ENCODE measurements at regions of chr1 and their contacts with region 1.

Region 1: DNA sequence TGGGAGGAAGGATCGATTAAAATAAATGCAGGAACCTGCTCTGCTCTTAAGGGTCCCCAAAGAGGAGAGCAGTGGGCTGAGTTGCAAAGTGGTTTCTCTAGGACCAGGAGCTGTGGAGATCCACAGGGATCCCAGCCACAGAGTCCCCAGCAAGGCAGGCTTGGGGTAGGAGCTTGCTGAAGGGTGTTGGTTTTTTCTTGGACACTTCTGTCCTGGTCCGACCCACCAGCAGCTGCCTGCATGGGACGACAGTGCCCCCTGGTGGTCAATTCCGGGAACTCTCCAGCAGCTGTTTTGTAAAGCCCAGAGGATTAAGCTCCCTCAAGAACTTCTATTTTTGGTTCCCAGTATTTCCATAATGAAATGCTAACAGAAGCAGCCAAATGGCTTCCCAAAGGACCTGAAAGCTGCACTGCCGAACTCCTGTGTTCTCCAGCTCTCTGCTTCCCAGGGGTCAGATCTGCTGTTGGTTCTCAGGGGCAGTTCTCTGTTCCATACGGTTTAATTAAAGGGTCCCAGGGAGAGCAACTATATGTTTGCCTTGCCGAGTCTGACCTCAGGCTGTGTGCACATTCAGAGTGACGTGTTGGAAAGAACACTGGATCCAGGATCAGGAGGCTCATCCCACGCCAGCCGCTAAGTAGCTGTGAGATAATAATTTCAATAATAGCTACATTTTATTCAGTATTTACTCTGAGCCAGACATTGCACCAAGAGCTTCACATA is 23.2 kb downstream of the NENF start:
- DNase-seq: no peak
- ATAC-seq: peak; percentile 91
- H3K4me3 ChIP-seq: no peak overlapping the region
- H3K27ac ChIP-seq: no peak overlapping the region
- H3K4me1 ChIP-seq: no peaks in the 10 kb centered on the region
- H3K27me3 ChIP-seq: no peaks in the 10 kb centered on the region; a peak in 1 of 4 replicates
- CTCF ChIP-seq: peak; percentile 95 to 99 (median 96)
- EP300 ChIP-seq: no peak
- POLR2A ChIP-seq: no peak
- RAD21 ChIP-seq: peak; percentile 100

Region 2: GRCh38 chr1:211825980-211826379 is 630.0 kb before region 1 on chr1:
- CTCF ChIA-PET with region 1: no interaction called
- POLR2A ChIA-PET with region 1: no interaction called
- RAD21 ChIA-PET with region 1: no interaction called
- SMC1A ChIA-PET with region 1: no interaction called
- in situ Hi-C with region 1: no loop called
- intact Hi-C with region 1: no loop called
- DNase-seq: no peak
- ATAC-seq: no peak
- H3K4me3 ChIP-seq: no peak overlapping the region
- H3K27ac ChIP-seq: no peak overlapping the region
- H3K4me1 ChIP-seq: no peaks in the 10 kb centered on the region; the same call in 1 of the 2 replicates
- H3K27me3 ChIP-seq: no peaks in the 10 kb centered on the region
- CTCF ChIP-seq: no peak
- EP300 ChIP-seq: no peak
- POLR2A ChIP-seq: no peak
- RAD21 ChIP-seq: no peak

Region 3: DNA sequence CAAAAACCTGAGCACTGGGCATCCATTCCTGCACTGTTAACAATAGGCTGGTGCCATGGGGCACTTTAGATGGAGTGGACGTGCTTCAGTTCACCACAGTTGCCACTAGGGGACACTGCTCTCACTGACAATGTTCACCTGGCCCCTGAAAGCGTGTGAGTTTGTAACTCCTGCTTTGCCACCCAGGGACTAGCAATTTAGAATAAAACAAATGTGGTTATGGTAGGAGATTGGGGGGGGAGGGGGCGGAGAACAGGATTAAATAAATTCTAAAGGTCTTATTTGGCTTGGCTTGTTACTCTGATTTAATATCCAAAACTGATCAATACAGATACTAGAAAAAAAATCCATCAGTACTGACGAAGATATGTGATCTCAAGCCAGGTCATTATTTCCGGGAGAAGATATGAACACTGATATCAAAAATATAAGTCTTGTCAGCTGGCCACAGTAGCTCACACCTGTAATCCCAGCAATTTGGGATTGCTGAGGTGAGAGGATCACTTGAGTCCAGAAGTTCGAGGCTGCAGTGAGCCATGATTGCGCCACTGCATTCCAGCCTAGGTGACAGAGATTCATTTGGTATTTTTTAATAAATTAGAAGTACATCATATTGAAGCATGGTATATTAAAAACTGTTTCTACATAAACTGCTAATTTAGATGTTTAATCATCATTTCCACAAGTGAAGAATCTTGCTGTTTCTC is 443.8 kb before region 1 on chr1:
- CTCF ChIA-PET with region 1: interaction called, 12 read pairs
- POLR2A ChIA-PET with region 1: no interaction called
- RAD21 ChIA-PET with region 1: interaction called, 5 read pairs
- SMC1A ChIA-PET with region 1: interaction called, 14 read pairs
- in situ Hi-C with region 1: no loop called
- intact Hi-C with region 1: loop called (anchors 1 kb)
- DNase-seq: peak; percentile 38
- ATAC-seq: peak; percentile 100
- H3K4me3 ChIP-seq: no peak overlapping the region
- H3K27ac ChIP-seq: no peak overlapping the region
- H3K4me1 ChIP-seq: no peaks in the 10 kb centered on the region
- H3K27me3 ChIP-seq: no peaks in the 10 kb centered on the region
- CTCF ChIP-seq: peak; percentile 95 to 100 (median 98)
- EP300 ChIP-seq: no peak
- POLR2A ChIP-seq: no peak
- RAD21 ChIP-seq: peak; percentile 97

Region 4: DNA sequence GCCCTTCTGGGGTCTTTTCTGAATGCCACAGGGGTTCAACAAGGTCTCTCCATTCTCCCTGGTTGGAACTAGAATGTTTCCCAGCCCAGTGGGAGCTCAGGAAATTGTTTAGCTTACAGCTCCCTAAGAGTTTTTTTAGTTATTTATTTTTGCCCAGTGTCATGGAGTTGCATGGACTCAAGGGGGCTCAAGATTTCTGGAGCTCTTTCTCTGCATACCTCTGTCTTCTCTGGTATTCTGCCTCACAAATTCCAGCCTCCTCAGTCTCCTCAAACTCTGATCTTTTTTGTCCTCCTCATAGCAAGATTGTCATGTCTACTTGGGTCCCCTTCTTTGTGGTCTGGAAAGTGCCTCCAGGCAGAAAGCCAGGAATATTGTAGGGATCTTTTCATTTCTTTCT is 186.7 kb before region 1 on chr1:
- CTCF ChIA-PET with region 1: interaction called, 16 read pairs
- POLR2A ChIA-PET with region 1: no interaction called
- RAD21 ChIA-PET with region 1: interaction called, 3 read pairs
- SMC1A ChIA-PET with region 1: interaction called, 5 read pairs
- in situ Hi-C with region 1: no loop called
- intact Hi-C with region 1: no loop called
- DNase-seq: no peak
- ATAC-seq: no peak
- H3K4me3 ChIP-seq: no peak overlapping the region
- H3K27ac ChIP-seq: no peak overlapping the region
- H3K4me1 ChIP-seq: no peaks in the 10 kb centered on the region
- H3K27me3 ChIP-seq: no peaks in the 10 kb centered on the region; a peak in 1 of 4 replicates
- CTCF ChIP-seq: no peak
- EP300 ChIP-seq: no peak
- POLR2A ChIP-seq: no peak
- RAD21 ChIP-seq: no peak

Region 5: DNA sequence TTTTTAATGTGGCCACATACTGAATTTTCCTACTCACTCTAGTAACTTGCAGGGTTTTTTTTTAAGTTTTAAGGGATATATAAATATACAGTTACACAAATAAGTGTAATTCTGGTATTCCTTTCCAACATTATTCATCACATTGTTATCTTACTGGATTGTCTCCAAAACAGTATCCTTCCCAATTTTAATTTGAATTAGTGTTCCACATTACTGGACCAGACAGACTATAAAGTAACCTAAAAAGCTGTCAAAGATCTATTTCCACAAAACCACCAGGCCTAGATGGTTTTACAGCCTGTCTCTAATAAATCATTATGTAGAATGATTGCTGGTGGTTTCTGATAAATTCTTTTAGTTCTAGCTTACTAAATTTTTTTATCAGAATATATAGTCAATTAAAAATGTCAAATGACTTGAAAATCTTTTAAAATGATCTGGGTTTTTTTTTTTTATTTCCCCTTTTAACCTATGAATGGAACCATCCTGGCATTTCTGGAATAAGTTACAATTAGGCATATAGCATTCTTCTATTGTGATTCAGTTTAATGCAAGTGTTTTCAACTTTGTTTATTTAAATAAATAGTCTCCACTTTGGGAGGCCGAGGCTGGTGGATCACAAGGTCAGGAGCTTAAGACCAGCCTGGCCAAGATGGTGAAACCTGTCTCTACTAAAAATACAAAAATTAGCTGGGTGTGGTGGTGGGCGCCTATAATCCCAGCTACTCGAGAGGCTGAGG is 100.6 kb before region 1 on chr1:
- CTCF ChIA-PET with region 1: interaction called, 26 read pairs
- POLR2A ChIA-PET with region 1: no interaction called
- RAD21 ChIA-PET with region 1: interaction called, 6 read pairs
- SMC1A ChIA-PET with region 1: interaction called, 102 read pairs
- in situ Hi-C with region 1: no loop called
- intact Hi-C with region 1: no loop called
- DNase-seq: no peak
- ATAC-seq: no peak
- H3K4me3 ChIP-seq: no peak overlapping the region
- H3K27ac ChIP-seq: no peak overlapping the region
- H3K4me1 ChIP-seq: no peaks in the 10 kb centered on the region
- H3K27me3 ChIP-seq: no peaks in the 10 kb centered on the region
- CTCF ChIP-seq: no peak
- EP300 ChIP-seq: no peak
- POLR2A ChIP-seq: no peak
- RAD21 ChIP-seq: no peak

Region 6: DNA sequence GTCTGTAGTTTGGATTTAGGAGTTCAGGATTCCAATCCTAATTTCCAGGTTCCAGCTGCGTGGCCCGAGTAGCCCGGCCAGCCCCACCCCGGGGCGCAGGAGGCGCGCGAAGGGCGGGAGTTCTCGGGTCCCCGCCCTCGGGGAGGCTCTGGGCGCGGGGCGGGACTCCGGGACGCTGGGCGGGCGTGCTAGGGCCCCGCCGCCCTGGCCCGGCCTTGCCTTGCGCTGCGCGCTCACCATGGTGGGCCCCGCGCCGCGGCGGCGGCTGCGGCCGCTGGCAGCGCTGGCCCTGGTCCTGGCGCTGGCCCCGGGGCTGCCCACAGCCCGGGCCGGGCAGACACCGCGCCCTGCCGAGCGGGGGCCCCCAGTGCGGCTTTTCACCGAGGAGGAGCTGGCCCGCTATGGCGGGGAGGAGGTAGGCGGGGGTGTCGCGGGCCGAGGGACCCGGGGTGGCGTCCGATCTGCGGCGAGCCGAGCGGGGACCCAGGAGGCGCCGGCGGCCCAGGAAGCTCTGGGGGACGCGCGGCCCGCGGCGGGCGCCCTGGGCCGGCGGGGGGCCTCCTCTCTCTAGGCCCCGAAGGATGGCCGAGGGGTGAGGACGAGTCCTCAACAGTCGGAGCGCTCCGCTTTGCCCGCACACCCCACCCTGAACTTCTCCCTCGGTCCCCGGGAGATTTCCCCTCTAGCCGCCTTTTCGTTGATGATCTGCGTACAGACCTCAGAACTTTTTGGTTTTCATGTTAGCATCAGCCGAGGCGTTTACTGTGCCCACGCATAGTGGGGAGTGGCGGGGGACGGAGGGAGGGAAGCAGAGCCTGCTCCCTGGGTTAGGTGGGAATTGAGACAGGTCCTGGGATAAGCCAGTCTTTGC is 23.0 kb before region 1 on chr1 and contains the start of gene NENF:
- CTCF ChIA-PET with region 1: interaction called, 13 read pairs
- POLR2A ChIA-PET with region 1: no interaction called
- RAD21 ChIA-PET with region 1: interaction called, 10 read pairs
- SMC1A ChIA-PET with region 1: interaction called, 19 read pairs
- in situ Hi-C with region 1: no loop called
- intact Hi-C with region 1: no loop called
- DNase-seq: no peak
- ATAC-seq: peak; percentile 100
- H3K4me3 ChIP-seq: peak within 1 kb of the TSS; percentile 86
- H3K27ac ChIP-seq: peak within 1 kb of the TSS; percentile 64
- H3K4me1 ChIP-seq: peaks cover 11% of the 10 kb centered on the region
- H3K27me3 ChIP-seq: no peaks in the 10 kb centered on the region
- CTCF ChIP-seq: no peak
- EP300 ChIP-seq: no peak
- POLR2A ChIP-seq: peak; percentile 70; the same call in 1 of the 2 replicates
- RAD21 ChIP-seq: no peak
- polyA plus RNA-seq, gene NENF: 5.1 to 19.3 TPM

Region 7: GRCh38 chr1:212630158-212630900 is 174.4 kb after region 1 on chr1:
- CTCF ChIA-PET with region 1: interaction called, 13 read pairs
- POLR2A ChIA-PET with region 1: no interaction called
- RAD21 ChIA-PET with region 1: interaction called, 4 read pairs
- SMC1A ChIA-PET with region 1: interaction called, 3 read pairs
- in situ Hi-C with region 1: no loop called
- intact Hi-C with region 1: no loop called
- DNase-seq: no peak
- ATAC-seq: peak; percentile 99
- H3K4me3 ChIP-seq: no peak overlapping the region
- H3K27ac ChIP-seq: no peak overlapping the region
- H3K4me1 ChIP-seq: peaks cover 16% of the 10 kb centered on the region
- H3K27me3 ChIP-seq: no peaks in the 10 kb centered on the region
- CTCF ChIP-seq: peak; percentile 82 to 99 (median 97)
- EP300 ChIP-seq: no peak
- POLR2A ChIP-seq: no peak
- RAD21 ChIP-seq: peak; percentile 81

Measured in GM12878 (cell line).